GM12878 (cell line): ENCODE measurements at regions of chr3 and their contacts with region 1.

Region 1: GRCh38 chr3:69200384-69201068 is 78.1 kb upstream of the LMOD3 start:
- DNase-seq: no peak
- ATAC-seq: peak; percentile 38
- H3K4me3 ChIP-seq: no peak overlapping the region
- H3K27ac ChIP-seq: no peak overlapping the region
- H3K4me1 ChIP-seq: peaks cover 10% of the 10 kb centered on the region
- H3K27me3 ChIP-seq: no peaks in the 10 kb centered on the region
- CTCF ChIP-seq: no peak
- EP300 ChIP-seq: no peak
- POLR2A ChIP-seq: no peak
- RAD21 ChIP-seq: no peak

Region 2: DNA sequence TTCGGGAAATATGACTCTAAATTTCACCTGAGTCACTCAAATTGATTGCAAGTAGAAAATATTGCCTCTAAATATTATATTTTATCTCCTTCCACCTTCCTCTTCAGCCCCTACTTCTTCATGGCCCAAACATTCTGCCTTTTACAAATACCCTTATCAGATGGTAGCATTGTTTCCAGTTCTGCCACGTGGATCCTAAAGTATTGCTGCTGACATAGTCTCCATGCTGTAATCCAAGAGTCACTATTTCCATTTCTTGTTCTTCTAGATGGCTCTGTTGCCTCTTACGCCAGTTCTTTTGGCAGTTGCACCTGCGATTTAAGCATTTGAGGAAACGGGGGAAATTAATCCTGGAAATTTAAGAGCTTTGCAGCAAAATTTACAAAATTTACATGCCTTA is 91.7 kb before region 1 on chr3:
- CTCF ChIA-PET with region 1: no interaction called
- POLR2A ChIA-PET with region 1: no interaction called
- RAD21 ChIA-PET with region 1: no interaction called
- SMC1A ChIA-PET with region 1: no interaction called
- in situ Hi-C with region 1: no loop called
- intact Hi-C with region 1: no loop called
- DNase-seq: no peak
- ATAC-seq: no peak
- H3K4me3 ChIP-seq: no peak overlapping the region
- H3K27ac ChIP-seq: no peak overlapping the region
- H3K4me1 ChIP-seq: no peaks in the 10 kb centered on the region
- H3K27me3 ChIP-seq: no peaks in the 10 kb centered on the region
- CTCF ChIP-seq: no peak
- EP300 ChIP-seq: no peak
- POLR2A ChIP-seq: no peak
- RAD21 ChIP-seq: no peak

Region 3: DNA sequence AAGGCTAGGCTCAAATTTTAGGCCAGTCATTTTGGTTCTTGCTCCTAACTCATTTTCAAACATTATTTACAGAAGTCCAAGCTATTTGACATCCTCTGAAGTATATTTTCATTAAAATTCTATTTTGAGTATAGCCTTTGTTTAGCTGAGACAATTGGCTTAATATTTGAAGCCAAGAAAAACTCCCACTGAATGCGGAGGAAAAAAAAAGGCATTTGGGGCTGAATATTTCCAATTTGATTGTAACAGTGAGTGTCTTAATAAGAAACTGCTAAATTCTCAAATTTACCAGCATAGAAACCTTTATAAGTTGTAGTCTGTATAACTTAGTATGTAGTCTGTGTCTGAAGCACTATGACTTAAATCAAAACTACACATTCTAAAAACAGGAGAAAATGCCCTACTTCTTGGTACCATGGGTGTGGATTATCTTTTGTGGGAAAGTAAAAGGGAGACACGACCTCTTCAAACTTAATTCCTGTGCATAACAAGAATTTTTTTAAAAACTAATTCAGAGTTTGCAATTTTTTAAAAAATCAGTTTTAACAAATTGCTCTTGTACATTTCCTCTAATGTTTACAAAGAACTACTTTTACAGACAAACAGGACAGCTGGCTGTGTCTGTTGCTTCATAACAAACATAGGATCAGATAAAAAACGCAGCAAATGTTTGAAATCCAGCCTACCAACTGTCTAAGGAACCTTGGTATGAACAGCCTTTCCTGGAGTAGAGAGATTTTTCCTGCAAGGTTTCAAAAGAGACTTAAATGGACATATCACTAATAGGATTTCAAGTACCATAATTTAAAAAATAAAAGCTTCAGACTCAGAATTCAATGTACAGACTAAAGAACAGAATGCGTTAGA is 25.4 kb before region 1 on chr3:
- CTCF ChIA-PET with region 1: interaction called, 10 read pairs
- POLR2A ChIA-PET with region 1: interaction called, 3 read pairs
- RAD21 ChIA-PET with region 1: interaction called, 19 read pairs
- SMC1A ChIA-PET with region 1: interaction called, 14 read pairs
- in situ Hi-C with region 1: no loop called
- intact Hi-C with region 1: no loop called
- DNase-seq: no peak
- ATAC-seq: no peak
- H3K4me3 ChIP-seq: no peak overlapping the region
- H3K27ac ChIP-seq: no peak overlapping the region
- H3K4me1 ChIP-seq: no peaks in the 10 kb centered on the region
- H3K27me3 ChIP-seq: no peaks in the 10 kb centered on the region
- CTCF ChIP-seq: no peak
- EP300 ChIP-seq: no peak
- POLR2A ChIP-seq: no peak
- RAD21 ChIP-seq: no peak

Region 4: DNA sequence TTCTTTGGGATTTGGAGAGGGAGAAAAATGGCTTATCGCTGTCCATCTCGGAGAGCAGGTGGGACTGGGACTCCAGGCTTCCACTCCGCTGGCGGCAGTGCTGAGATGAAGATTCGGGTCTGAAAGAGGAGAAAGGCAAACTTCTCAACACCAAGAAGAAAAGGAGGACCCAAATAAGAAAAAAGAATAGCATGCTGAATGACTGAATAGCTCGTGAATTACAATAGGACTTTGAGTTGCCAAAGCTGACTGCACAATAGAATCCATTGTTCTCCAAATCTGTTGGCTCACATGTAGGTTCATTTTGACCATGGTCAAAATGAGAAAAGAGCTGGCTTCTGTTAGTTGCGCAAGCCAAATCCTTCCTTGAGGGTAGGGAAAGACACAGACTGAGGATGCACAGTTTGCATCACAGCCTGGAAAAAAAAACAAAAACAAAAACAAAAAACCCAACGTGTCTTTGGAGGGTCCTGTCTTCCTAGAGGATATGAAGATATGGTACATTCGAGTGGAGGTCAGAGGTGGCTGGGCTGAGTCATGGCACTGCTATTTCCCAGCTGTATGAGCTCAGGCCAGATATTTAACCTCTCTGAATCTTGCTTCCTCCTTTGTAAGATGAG is 18.8 kb before region 1 on chr3:
- CTCF ChIA-PET with region 1: interaction called, 10 read pairs
- POLR2A ChIA-PET with region 1: interaction called, 5 read pairs
- RAD21 ChIA-PET with region 1: interaction called, 19 read pairs
- SMC1A ChIA-PET with region 1: interaction called, 12 read pairs
- in situ Hi-C with region 1: no loop called
- intact Hi-C with region 1: no loop called
- DNase-seq: no peak
- ATAC-seq: no peak
- H3K4me3 ChIP-seq: no peak overlapping the region
- H3K27ac ChIP-seq: no peak overlapping the region
- H3K4me1 ChIP-seq: no peaks in the 10 kb centered on the region
- H3K27me3 ChIP-seq: no peaks in the 10 kb centered on the region
- CTCF ChIP-seq: no peak
- EP300 ChIP-seq: no peak
- POLR2A ChIP-seq: no peak
- RAD21 ChIP-seq: no peak

Region 5: DNA sequence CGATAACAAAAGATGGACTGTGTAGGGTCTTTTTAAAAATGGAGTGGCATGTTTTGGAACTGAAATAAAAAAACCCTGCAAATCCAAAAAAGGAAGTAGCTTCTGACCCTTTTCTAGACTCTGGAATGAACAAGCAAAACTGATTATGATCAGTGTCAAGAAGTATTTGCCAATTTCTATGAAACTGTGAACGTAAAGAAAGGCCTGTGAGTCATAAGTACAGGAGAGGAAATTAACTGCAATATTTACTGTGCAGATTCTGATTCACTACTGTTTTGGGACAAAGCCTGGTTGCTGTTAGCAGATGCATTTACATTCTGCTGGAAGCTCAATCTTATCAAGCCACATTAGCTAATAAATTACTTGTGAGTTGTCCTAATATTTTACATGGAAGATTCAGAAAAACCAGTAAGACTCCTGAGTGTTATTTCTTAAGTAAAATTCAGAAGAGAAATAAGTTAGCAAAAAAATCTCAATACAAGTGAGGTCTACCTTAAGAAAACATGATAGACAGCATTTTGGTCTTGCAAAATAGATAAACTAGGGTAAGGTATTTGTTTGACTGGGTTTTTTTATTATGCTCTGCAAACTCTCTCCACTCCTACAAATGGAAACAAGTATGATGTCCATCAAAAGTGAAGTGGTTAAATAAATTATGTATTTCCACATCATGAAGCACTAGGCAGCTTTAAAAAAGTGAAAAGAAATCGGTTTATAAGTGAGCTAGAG is 12.0 kb after region 1 on chr3:
- CTCF ChIA-PET with region 1: interaction called, 3 read pairs
- POLR2A ChIA-PET with region 1: interaction called, 10 read pairs
- RAD21 ChIA-PET with region 1: interaction called, 5 read pairs
- SMC1A ChIA-PET with region 1: interaction called, 5 read pairs
- in situ Hi-C with region 1: no loop called
- intact Hi-C with region 1: no loop called
- DNase-seq: no peak
- ATAC-seq: peak; percentile 92
- H3K4me3 ChIP-seq: no peak overlapping the region
- H3K27ac ChIP-seq: no peak overlapping the region
- H3K4me1 ChIP-seq: no peaks in the 10 kb centered on the region
- H3K27me3 ChIP-seq: no peaks in the 10 kb centered on the region
- CTCF ChIP-seq: no peak
- EP300 ChIP-seq: peak; percentile 24 to 27; a peak in 1 of 4 replicates
- POLR2A ChIP-seq: no peak
- RAD21 ChIP-seq: no peak

Region 6: DNA sequence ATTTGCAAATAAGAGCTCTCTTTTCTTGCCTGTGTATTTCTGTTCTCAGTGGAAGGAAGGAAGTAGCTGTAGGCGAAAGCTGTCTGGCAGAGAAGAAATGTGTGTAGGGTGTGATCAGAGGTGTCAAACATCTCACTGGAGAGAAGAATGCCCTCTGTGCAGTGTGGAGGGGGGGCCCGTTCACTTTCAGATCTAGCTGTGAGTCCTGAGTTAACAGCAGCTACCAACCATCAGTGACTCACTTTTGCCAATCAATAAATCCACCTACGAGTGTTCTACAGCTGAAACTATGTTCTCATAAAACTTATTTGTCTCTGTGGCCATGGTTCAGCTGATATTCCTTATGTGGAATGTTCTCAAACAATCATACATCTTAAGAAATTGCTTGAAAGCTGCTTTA is 81.7 kb after region 1 on chr3:
- CTCF ChIA-PET with region 1: no interaction called
- POLR2A ChIA-PET with region 1: interaction called, 3 read pairs
- RAD21 ChIA-PET with region 1: interaction called, 8 read pairs
- SMC1A ChIA-PET with region 1: interaction called, 11 read pairs
- in situ Hi-C with region 1: no loop called
- intact Hi-C with region 1: no loop called
- DNase-seq: no peak
- ATAC-seq: peak; percentile 96
- H3K4me3 ChIP-seq: no peak overlapping the region
- H3K27ac ChIP-seq: no peak overlapping the region
- H3K4me1 ChIP-seq: no peaks in the 10 kb centered on the region
- H3K27me3 ChIP-seq: no peaks in the 10 kb centered on the region
- CTCF ChIP-seq: no peak
- EP300 ChIP-seq: no peak; a peak in 1 of 4 replicates
- POLR2A ChIP-seq: no peak
- RAD21 ChIP-seq: no peak